CD8-positive, alpha-beta T cell (primary cell): ENCODE measurements at regions of chr6 and their contacts with region 1.

Region 1: GRCh38 chr6:2988426-2989331 is 11.0 kb upstream of the NQO2 start:
- DNase-seq: peak; percentile 65 to 91 (median 75)
- ATAC-seq: peak; percentile 64
- H3K4me3 ChIP-seq: peak overlapping the region; percentile 65 to 94
- H3K4me3 Mint-ChIP-seq: peak overlapping the region; percentile 96
- H3K27ac ChIP-seq: peak overlapping the region; percentile 97 to 98
- H3K27ac Mint-ChIP-seq: peak overlapping the region; percentile 99
- H3K4me1 ChIP-seq: peaks cover 8% of the 10 kb centered on the region
- H3K4me1 Mint-ChIP-seq: peaks cover 27% of the 10 kb centered on the region
- H3K27me3 ChIP-seq: no peaks in the 10 kb centered on the region
- H3K27me3 Mint-ChIP-seq: no peaks in the 10 kb centered on the region
- CTCF ChIP-seq: peak; percentile 68

Region 2: DNA sequence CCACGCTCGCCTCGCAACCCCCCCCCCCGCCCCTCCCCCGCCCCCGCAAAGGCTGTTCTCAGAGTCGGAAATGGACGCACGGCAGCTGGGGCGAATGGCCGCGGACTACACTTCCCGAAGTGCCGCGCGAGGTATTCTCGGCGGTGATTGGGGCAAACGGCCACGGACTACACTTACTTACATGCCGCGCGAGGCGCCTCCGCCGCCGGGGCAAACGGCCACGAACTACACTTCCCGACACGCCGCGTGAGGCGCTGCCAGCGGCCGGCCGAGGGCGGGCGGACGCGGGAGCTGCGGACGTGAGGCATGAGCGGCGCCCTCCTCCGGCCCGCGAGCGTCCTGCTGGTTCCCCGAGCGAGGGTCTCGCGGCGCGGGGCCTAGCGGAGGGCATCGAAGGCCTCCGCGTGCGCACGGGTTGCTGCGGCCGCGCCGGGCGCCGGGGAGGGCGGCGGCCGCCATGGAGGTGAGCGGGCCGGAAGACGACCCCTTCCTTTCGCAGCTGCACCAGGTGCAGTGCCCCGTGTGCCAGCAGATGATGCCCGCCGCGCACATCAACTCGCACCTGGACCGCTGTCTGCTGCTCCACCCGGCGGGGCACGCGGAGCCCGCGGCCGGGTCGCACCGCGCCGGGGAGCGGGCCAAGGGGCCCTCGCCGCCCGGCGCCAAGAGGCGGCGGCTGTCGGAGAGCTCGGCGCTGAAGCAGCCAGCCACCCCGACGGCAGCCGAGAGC is 223.3 kb before region 1 on chr6 and contains the start of gene WRNIP1:
- CTCF ChIA-PET with region 1: interaction called, 6 read pairs
- POLR2A ChIA-PET with region 1: interaction called, 19 read pairs
- intact Hi-C with region 1: loop called (anchors 1 kb)
- DNase-seq: peak; percentile 93 to 99 (median 96)
- ATAC-seq: peak; percentile 84
- H3K4me3 ChIP-seq: peak within 1 kb of the TSS; percentile 72 to 76
- H3K4me3 Mint-ChIP-seq: peak within 1 kb of the TSS; percentile 95
- H3K27ac ChIP-seq: peak within 1 kb of the TSS; percentile 88 to 97
- H3K27ac Mint-ChIP-seq: peak within 1 kb of the TSS; percentile 99
- H3K4me1 ChIP-seq: peaks cover 43% of the 10 kb centered on the region
- H3K4me1 Mint-ChIP-seq: peaks cover 47% of the 10 kb centered on the region
- H3K27me3 ChIP-seq: no peaks in the 10 kb centered on the region
- H3K27me3 Mint-ChIP-seq: no peaks in the 10 kb centered on the region
- CTCF ChIP-seq: peak; percentile 35
- total RNA-seq, gene WRNIP1: 21.3 to 23.0 TPM

Region 3: DNA sequence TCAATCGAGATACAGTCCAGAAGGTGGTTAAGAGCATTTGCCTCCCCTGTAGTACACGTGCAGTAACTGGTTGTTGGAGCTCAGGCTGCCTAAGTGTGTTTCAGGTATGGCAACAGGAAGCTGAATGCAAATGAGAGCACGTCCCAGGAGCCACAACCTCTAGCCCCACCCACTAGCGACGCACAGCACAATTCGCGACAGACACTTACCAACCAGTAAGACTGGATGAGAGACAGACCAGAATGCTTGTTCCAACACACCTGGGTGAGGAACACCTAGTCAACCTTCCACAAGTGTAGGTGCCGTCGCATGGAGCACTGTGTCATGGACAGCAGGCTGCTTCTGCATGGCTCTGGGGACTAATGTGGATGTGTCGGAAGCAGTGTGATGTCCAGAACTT is 139.8 kb before region 1 on chr6:
- CTCF ChIA-PET with region 1: interaction called, 61 read pairs
- POLR2A ChIA-PET with region 1: interaction called, 31 read pairs
- intact Hi-C with region 1: loop called (anchors 1 kb)
- DNase-seq: peak; percentile 30 to 87 (median 75)
- ATAC-seq: peak; percentile 88
- H3K4me3 ChIP-seq: no peak overlapping the region
- H3K4me3 Mint-ChIP-seq: peak overlapping the region; percentile 27
- H3K27ac ChIP-seq: peak overlapping the region; percentile 1 to 26
- H3K27ac Mint-ChIP-seq: peak overlapping the region; percentile 92
- H3K4me1 ChIP-seq: peaks cover 27% of the 10 kb centered on the region
- H3K4me1 Mint-ChIP-seq: peaks cover 40% of the 10 kb centered on the region
- H3K27me3 ChIP-seq: no peaks in the 10 kb centered on the region
- H3K27me3 Mint-ChIP-seq: no peaks in the 10 kb centered on the region
- CTCF ChIP-seq: no peak

Region 4: GRCh38 chr6:2900821-2901644 is 87.6 kb before region 1 on chr6:
- CTCF ChIA-PET with region 1: interaction called, 5 read pairs
- POLR2A ChIA-PET with region 1: interaction called, 6 read pairs
- intact Hi-C with region 1: loop called in 1 of 2 experiments (anchors 1 kb)
- DNase-seq: peak in 1 of 9 experiments; percentile 46
- ATAC-seq: no peak
- H3K4me3 ChIP-seq: peak overlapping the region; percentile 73 to 90
- H3K4me3 Mint-ChIP-seq: peak overlapping the region; percentile 99
- H3K27ac ChIP-seq: peak overlapping the region; percentile 67 to 82
- H3K27ac Mint-ChIP-seq: peak overlapping the region; percentile 96
- H3K4me1 ChIP-seq: peaks cover 37% of the 10 kb centered on the region
- H3K4me1 Mint-ChIP-seq: peaks cover 60% of the 10 kb centered on the region
- H3K27me3 ChIP-seq: no peaks in the 10 kb centered on the region
- H3K27me3 Mint-ChIP-seq: no peaks in the 10 kb centered on the region
- CTCF ChIP-seq: no peak

Region 5: DNA sequence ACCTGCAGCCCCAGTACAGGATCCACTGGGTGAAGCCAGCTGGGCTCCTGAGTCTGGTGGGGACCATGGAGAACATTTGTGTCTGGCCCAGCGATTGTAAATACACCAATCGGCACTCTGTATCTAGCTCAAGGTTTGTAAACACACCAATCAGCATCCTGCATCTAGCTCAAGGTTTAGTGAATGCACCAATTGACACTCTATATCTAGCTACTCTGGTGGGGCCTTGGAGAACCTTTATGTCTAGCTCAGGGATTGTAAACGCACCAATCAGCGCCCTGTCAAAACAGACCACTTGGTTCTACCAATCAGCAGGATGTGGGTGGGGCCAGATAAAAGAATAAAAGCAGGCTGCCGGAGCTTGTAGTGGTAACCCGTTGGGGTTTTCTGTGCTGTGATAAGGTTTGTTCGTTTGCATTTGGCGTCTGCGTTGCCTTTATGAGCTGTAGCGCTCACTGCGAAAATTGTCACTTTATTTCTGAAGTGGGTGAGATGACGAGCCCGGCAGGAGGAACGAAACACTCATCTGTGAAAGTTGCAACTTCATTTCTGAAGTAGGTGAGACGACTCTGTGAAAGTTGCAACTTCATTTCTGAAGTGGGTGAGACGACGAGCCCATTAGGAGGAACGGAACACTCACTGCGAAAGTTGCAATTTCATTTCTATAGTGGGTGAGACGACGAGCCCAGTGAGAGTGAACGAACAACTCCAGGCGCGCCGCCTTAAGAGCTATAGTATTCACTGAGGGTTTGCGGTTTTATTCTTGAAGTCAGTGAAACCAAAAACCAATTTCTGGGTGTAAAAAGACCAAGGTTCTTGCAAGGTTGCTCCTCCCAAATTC is 48.4 kb before region 1 on chr6:
- CTCF ChIA-PET with region 1: interaction called, 40 read pairs
- POLR2A ChIA-PET with region 1: interaction called, 98 read pairs
- intact Hi-C with region 1: loop called (anchors 1 to 2 kb)
- DNase-seq: peak; percentile 52 to 91 (median 73)
- ATAC-seq: peak; percentile 70
- H3K4me3 ChIP-seq: peak overlapping the region; percentile 52 to 75
- H3K4me3 Mint-ChIP-seq: peak overlapping the region; percentile 84
- H3K27ac ChIP-seq: peak overlapping the region; percentile 73 to 84
- H3K27ac Mint-ChIP-seq: peak overlapping the region; percentile 94
- H3K4me1 ChIP-seq: peaks cover 87% of the 10 kb centered on the region
- H3K4me1 Mint-ChIP-seq: peaks cover 80% of the 10 kb centered on the region
- H3K27me3 ChIP-seq: no peaks in the 10 kb centered on the region
- H3K27me3 Mint-ChIP-seq: no peaks in the 10 kb centered on the region
- CTCF ChIP-seq: no peak

Region 6: DNA sequence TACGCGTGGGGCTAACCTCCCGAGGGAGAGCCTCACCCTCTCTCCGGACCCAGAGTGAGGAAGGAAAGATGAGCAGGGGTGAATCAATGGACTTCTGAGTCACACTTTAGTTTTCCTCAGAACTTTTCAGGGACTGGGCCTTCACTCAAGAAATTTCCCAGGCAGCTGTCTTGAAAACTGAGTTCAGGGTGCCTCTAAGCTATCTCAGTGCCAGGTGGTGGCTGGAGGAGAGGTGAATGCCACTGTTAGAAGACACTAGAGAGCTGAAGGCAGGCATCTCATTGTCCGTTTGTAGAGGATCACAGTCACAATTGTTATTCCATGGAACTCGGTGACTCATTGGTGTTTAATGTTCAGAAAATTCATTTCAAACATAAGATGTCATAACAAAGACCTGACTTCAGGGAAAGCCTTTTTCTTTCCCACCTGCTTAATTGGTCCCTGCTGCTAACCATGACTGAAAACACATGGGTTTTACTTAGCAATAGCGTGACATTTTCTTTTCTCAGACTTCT is 12.1 kb before region 1 on chr6:
- CTCF ChIA-PET with region 1: interaction called, 20 read pairs
- POLR2A ChIA-PET with region 1: interaction called, 12 read pairs
- intact Hi-C with region 1: loop called (anchors 1 to 2 kb)
- DNase-seq: no peak
- ATAC-seq: no peak
- H3K4me3 ChIP-seq: no peak overlapping the region
- H3K4me3 Mint-ChIP-seq: no peak overlapping the region
- H3K27ac ChIP-seq: no peak overlapping the region
- H3K27ac Mint-ChIP-seq: no peak overlapping the region
- H3K4me1 ChIP-seq: no peaks in the 10 kb centered on the region
- H3K4me1 Mint-ChIP-seq: peaks cover 20% of the 10 kb centered on the region
- H3K27me3 ChIP-seq: no peaks in the 10 kb centered on the region
- H3K27me3 Mint-ChIP-seq: peaks cover 6% of the 10 kb centered on the region
- CTCF ChIP-seq: no peak

Region 7: DNA sequence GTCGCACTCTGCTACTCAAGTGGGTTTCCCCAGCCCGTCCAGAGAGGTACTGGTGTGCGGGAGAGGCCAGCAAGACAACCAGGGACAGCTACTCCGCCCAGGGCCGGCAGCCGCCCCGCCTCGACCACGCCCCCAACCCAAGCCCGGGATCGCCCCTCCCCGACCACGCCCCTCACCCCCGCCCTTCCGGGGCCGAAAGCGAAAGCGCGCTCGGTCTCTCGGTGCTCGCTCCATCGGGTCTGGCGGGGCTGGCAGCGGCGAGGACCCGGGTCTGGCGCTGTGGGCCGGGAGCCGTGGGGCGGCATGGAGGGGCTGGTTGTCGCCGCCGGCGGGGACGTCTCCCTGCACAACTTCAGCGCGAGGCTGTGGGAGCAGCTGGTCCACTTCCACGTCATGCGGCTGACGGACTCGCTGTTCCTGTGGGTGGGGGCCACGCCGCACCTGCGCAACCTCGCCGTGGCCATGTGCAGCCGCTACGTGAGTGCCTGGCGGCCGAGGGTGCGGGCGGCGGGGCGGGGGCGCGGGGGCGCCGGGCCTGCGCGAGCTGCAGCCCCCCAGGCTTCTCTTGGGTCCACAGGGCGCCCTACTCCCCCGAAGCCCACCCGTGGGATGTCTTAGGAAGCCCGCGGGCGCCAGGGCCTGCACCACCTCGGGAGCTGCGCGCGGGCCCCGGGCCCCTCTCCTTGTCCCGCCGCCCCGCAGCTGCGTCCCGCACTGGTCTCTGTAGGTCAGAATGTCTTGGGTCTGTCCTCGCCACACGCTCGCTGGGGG is 270.2 kb after region 1 on chr6 and contains the start of gene PSMG4:
- CTCF ChIA-PET with region 1: no interaction called
- POLR2A ChIA-PET with region 1: interaction called, 3 read pairs
- intact Hi-C with region 1: loop called (anchors 2 to 5 kb)
- DNase-seq: peak; percentile 85 to 96 (median 93)
- ATAC-seq: peak; percentile 82
- H3K4me3 ChIP-seq: peak within 1 kb of the TSS; percentile 81 to 82
- H3K4me3 Mint-ChIP-seq: peak within 1 kb of the TSS; percentile 95
- H3K27ac ChIP-seq: peak within 1 kb of the TSS; percentile 54 to 76
- H3K27ac Mint-ChIP-seq: peak within 1 kb of the TSS; percentile 94
- H3K4me1 ChIP-seq: peaks cover 37% of the 10 kb centered on the region
- H3K4me1 Mint-ChIP-seq: peaks cover 42% of the 10 kb centered on the region
- H3K27me3 ChIP-seq: no peaks in the 10 kb centered on the region
- H3K27me3 Mint-ChIP-seq: no peaks in the 10 kb centered on the region
- CTCF ChIP-seq: no peak
- total RNA-seq, gene PSMG4: 11.8 to 12.0 TPM